K562 (cell line): ENCODE measurements at regions of chr11 and their contacts with region 1.

Region 1: GRCh38 chr11:31397239-31397834 is 27.7 kb downstream of the DNAJC24 start:
- DNase-seq: peak in 3 of 4 experiments; percentile 7 to 30 (median 23)
- ATAC-seq: peak; percentile 67
- H3K4me3 ChIP-seq: no peak overlapping the region
- H3K27ac ChIP-seq: no peak overlapping the region
- H3K4me1 ChIP-seq: no peaks in the 10 kb centered on the region
- H3K27me3 ChIP-seq: no peaks in the 10 kb centered on the region
- CTCF ChIP-seq: peak in 2 of 3 experiments; percentile 45 to 78; a peak in 3 of 6 replicates
- EP300 ChIP-seq: no peak
- POLR2A ChIP-seq: no peak
- RAD21 ChIP-seq: peak; percentile 69 to 76

Region 2: GRCh38 chr11:31619980-31620379 is 222.6 kb after region 1 on chr11:
- CTCF ChIA-PET with region 1: no interaction called
- POLR2A ChIA-PET with region 1: no interaction called
- in situ Hi-C with region 1: no loop called
- intact Hi-C with region 1: loop called (anchors 10 kb)
- DNase-seq: no peak
- ATAC-seq: no peak
- H3K4me3 ChIP-seq: no peak overlapping the region
- H3K27ac ChIP-seq: no peak overlapping the region
- H3K4me1 ChIP-seq: no peaks in the 10 kb centered on the region
- H3K27me3 ChIP-seq: no peaks in the 10 kb centered on the region
- CTCF ChIP-seq: no peak
- EP300 ChIP-seq: no peak
- POLR2A ChIP-seq: no peak
- RAD21 ChIP-seq: no peak

Region 3: GRCh38 chr11:31870609-31871309 is 473.4 kb after region 1 on chr11:
- CTCF ChIA-PET with region 1: interaction called, 4 read pairs
- POLR2A ChIA-PET with region 1: no interaction called
- in situ Hi-C with region 1: loop called (anchors 5 kb)
- intact Hi-C with region 1: loop called (anchors 2 kb)
- DNase-seq: peak; percentile 32 to 66 (median 37)
- ATAC-seq: peak; percentile 92
- H3K4me3 ChIP-seq: no peak overlapping the region
- H3K27ac ChIP-seq: no peak overlapping the region
- H3K4me1 ChIP-seq: no peaks in the 10 kb centered on the region
- H3K27me3 ChIP-seq: peaks cover 5 to 12% of the 10 kb centered on the region in 2 experiments; a peak in 2 of 5 replicates
- CTCF ChIP-seq: peak; percentile 73 to 81 (median 79)
- EP300 ChIP-seq: no peak
- POLR2A ChIP-seq: no peak
- RAD21 ChIP-seq: peak; percentile 81 to 91

Region 4: DNA sequence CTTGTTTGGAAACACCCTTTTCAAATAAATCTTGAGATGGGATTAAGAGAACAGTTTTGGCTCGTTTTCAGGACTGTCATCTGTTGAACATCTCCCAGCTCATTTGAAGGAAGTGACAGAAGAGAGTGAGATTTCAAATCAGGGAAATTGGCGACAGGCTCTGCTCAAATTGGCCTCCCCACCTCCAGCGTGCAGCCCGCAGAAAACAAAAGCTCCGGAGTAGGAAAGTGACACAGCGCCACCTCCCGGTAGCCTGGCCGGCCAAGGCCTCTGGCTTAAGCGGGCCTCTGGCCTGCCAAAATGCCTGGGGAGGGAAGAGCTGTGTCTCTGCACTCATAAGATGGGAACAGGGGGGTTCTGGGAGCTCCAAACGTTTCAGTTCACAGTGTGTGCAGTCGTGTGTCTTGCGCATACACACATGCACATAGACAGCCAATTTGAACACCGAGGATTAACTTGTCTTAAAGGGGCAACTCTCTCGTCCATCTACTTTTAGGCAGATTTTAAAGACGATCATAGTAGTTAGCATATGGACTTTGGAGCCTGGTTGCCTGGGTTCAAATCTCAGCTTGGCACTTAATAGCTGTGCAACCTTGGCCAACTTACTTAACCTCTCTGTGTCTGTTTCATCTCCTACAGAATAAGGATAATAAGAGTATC is 560.9 kb after region 1 on chr11:
- CTCF ChIA-PET with region 1: interaction called, 5 read pairs
- POLR2A ChIA-PET with region 1: no interaction called
- in situ Hi-C with region 1: no loop called
- intact Hi-C with region 1: loop called (anchors 5 kb)
- DNase-seq: peak; percentile 70 to 73 (median 72)
- ATAC-seq: peak; percentile 98
- H3K4me3 ChIP-seq: no peak overlapping the region
- H3K27ac ChIP-seq: no peak overlapping the region
- H3K4me1 ChIP-seq: no peaks in the 10 kb centered on the region; a peak in 1 of 5 replicates
- H3K27me3 ChIP-seq: peaks cover 0 to 3% of the 10 kb centered on the region in 2 experiments; a peak in 3 of 5 replicates
- CTCF ChIP-seq: peak; percentile 78 to 90 (median 81)
- EP300 ChIP-seq: no peak
- POLR2A ChIP-seq: no peak
- RAD21 ChIP-seq: peak; percentile 61 to 83

Region 5: GRCh38 chr11:32168924-32169323 is 771.6 kb after region 1 on chr11:
- CTCF ChIA-PET with region 1: no interaction called
- POLR2A ChIA-PET with region 1: no interaction called
- in situ Hi-C with region 1: loop called (anchors 10 kb)
- intact Hi-C with region 1: no loop called
- DNase-seq: no peak
- ATAC-seq: no peak
- H3K4me3 ChIP-seq: no peak overlapping the region
- H3K27ac ChIP-seq: no peak overlapping the region
- H3K4me1 ChIP-seq: no peaks in the 10 kb centered on the region
- H3K27me3 ChIP-seq: peaks cover 2 to 16% of the 10 kb centered on the region in 2 experiments
- CTCF ChIP-seq: no peak
- EP300 ChIP-seq: no peak
- POLR2A ChIP-seq: no peak
- RAD21 ChIP-seq: no peak